GM13976 (cell line): ENCODE measurements at regions of chr17 and their contacts with region 1.

Region 1: DNA sequence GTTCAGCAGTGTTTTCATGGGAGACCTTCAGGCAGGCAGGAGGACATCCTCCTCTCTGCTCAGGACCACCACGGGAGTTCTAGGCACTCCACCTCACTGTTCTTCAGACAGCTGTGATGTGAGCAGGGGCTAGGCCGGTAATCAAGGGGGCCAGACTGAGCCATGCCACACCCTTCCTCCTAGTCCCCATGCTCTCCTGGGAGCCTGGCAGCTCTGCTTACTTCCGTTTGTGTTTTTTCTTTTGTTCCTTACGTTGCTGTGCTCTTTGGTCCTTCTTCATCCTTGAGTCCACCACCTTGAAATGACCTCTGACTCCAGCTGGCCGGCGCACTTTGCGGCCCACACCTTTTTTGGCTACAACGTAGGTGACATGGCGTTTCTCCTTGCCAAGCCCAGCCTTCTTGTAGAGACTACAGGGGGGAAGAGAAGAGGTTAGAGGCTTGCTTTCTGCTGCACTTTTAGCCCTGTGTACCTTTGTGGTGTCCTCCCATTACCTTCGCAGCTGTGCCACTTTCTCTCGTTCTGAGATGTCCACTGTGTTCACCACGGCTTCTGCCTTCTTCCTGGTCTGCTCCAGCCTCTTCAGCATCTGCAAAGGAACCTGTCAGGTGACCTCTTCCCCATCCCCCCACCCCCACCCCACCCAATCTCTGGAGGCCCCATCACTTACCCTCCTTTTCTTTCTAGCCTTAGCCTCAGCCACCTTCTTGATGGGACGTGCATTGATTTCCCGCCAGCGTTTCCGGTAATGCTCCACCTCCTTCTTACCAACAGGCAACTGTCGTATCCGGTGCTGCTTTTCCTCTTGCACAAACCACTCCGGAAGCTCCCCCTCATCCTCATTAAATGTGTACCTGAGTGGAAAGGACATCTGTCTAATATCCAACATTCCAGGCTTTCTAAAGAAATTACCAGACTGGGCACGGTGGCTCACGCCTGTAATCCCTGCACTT is 7.4 kb upstream of the PSMC5 start:
- DNase-seq: no peak
- CTCF ChIP-seq: no peak

Region 2: GRCh38 chr17:63445979-63446691 is 373.7 kb before region 1 on chr17 and contains the start of gene CYB561:
- in situ Hi-C with region 1: loop called (anchors 25 kb)
- DNase-seq: peak; percentile 93
- CTCF ChIP-seq: peak; percentile 27

Region 3: DNA sequence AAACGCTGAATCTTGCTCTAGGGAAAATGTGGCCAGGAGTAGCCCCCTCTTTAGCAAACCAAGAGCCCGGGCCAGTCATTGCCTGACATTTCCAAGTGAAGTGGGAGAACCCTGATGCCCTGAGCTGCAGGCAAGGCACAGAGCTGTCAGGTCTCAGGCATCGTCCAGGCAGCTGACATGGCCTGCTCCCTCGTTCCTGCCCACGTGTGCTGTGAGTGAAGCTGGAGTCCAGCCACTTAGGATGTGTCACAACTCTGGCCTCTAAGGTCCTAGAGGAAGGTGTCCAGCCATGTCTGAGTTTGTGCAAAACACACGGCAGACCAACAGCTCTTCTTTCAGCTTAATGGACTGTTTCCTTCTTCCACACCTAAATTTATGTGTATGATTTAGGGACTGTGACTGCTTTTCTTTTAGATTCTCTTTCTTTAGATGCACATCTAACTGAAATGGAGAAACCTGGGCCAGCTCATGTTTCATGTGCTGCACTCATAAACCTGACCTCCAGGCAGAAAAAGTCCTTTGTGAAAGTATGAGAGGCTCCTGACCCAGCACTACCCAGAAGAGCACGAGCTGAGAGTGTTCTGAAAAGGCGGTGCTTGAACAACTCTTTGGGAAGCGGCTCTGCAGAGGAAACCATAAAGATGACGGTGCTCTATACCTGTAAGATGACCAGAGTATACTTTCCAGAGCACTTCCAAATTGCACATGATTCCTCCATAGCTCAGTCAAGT is 105.1 kb before region 1 on chr17:
- in situ Hi-C with region 1: no loop called
- DNase-seq: no peak
- CTCF ChIP-seq: no peak

Region 4: DNA sequence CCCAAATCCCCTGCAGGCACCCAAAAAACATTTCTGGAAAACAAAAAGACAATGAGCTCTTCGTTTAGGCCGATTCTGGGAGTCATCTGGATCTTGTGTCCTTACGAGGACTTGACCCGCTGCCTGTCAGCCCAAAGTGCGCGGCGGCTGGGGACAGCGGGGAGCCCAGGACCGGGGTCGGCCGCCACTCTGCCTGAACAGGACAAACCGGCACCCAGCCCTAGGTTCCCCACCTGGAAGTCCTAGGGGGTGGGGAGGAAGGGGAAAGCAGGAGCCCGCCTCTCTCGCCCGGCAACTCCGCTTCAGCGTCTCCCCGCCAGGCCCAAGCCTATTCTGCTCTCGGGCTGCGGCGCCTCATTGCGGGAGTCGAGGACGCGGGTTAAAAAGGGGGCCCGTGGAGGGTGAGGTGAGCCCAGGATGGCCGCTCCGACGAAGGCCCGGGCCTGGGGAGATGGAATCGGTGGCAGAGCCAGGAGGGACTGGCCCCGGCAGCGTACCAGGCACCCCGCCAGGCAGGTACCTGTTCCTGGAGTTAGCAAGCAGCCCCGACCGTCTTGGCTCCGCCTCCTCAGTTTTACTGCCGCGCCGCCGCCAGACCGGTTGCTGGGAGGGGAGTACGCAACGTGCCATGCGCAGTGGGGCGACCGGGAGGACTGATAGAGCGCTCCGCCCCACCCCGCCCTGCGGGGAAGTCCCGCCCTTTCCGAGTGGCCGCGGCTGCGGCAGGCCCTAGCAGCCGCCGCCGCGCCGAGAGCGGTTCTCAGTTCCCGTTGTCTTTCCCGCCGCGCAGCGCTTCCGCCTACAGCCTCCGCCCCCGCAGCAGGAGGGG is 78.4 kb before region 1 on chr17 and contains the start of gene STRADA:
- in situ Hi-C with region 1: no loop called
- DNase-seq: peak; percentile 98
- CTCF ChIP-seq: no peak

Region 5: DNA sequence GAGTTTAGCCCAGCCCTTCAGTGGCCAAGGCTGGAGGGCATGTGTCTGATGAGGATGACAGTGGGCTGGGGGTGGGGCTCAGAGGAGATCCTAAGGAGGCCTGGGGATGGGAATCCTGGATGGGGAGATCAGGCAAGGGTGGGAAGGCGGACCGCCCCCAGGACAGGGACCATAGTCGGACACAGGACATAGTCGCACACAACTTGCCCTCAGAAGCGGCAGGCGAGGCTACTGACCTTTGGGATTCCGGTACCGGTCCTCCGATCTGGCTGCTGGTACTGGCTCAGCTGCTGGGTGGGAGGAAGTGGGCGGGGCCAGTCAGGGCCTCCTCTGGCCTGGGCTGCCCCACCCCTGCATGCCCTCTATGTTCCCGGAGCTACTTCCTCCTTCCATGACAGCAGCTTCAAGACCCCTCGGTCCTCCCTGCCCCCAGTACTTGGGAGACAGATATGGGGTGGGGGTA is 111.3 kb after region 1 on chr17:
- in situ Hi-C with region 1: no loop called
- DNase-seq: peak; percentile 85
- CTCF ChIP-seq: no peak